Caco-2 (cell line): ENCODE measurements at regions of chr13 and their contacts with region 1.

Region 1: DNA sequence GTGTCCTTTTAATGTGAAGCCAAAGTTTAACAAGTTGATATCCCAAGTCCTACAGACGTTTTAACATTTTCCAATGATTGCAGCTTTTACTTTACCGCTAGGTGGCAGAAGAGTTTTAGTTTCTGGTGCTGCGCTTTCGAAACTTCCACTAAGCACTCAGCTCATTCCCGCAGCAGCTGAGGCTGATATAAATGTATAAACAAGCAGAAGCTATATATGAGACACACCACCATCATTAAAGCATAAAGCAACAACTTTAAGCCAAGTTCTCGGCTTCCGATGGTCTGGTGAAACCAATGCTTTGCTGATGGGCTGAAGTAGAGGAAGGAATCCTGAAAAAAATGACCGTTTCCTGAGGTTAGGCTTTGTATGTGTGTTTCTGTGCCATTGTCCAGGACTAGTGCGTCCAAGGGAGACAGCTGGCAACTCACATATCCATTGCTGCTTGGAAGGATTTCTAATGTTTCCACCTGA is 753.9 kb downstream of the OLFM4 start:
- DNase-seq: peak in 1 of 2 experiments; percentile 52
- H3K4me3 ChIP-seq: no peak overlapping the region
- H3K4me3 Mint-ChIP-seq: no peak overlapping the region
- H3K27ac Mint-ChIP-seq: no peak overlapping the region
- H3K4me1 ChIP-seq: no peaks in the 10 kb centered on the region
- H3K4me1 Mint-ChIP-seq: no peaks in the 10 kb centered on the region
- H3K27me3 ChIP-seq: no peaks in the 10 kb centered on the region; the same call in 1 of the 2 replicates
- H3K27me3 Mint-ChIP-seq: peaks cover 11% of the 10 kb centered on the region
- CTCF ChIP-seq: peak; percentile 73 to 83

Region 2: GRCh38 chr13:53250266-53250875 is 532.2 kb before region 1 on chr13:
- CTCF ChIA-PET with region 1: interaction called, 32 read pairs
- POLR2A ChIA-PET with region 1: no interaction called
- intact Hi-C with region 1: loop called (anchors 1 kb)
- DNase-seq: peak in 1 of 2 experiments; percentile 72
- H3K4me3 ChIP-seq: no peak overlapping the region
- H3K4me3 Mint-ChIP-seq: no peak overlapping the region
- H3K27ac Mint-ChIP-seq: no peak overlapping the region
- H3K4me1 ChIP-seq: no peaks in the 10 kb centered on the region
- H3K4me1 Mint-ChIP-seq: no peaks in the 10 kb centered on the region
- H3K27me3 ChIP-seq: no peaks in the 10 kb centered on the region
- H3K27me3 Mint-ChIP-seq: peaks cover 15% of the 10 kb centered on the region
- CTCF ChIP-seq: peak; percentile 68 to 77

Region 3: GRCh38 chr13:53368948-53369347 is 413.6 kb before region 1 on chr13:
- CTCF ChIA-PET with region 1: no interaction called
- POLR2A ChIA-PET with region 1: no interaction called
- intact Hi-C with region 1: loop called (anchors 5 kb)
- DNase-seq: peak in 1 of 2 experiments; percentile 12
- H3K4me3 ChIP-seq: no peak overlapping the region
- H3K4me3 Mint-ChIP-seq: no peak overlapping the region
- H3K27ac Mint-ChIP-seq: no peak overlapping the region
- H3K4me1 ChIP-seq: no peaks in the 10 kb centered on the region
- H3K4me1 Mint-ChIP-seq: no peaks in the 10 kb centered on the region
- H3K27me3 ChIP-seq: no peaks in the 10 kb centered on the region
- H3K27me3 Mint-ChIP-seq: peaks cover 4% of the 10 kb centered on the region
- CTCF ChIP-seq: peak; percentile 28 to 29

Region 4: DNA sequence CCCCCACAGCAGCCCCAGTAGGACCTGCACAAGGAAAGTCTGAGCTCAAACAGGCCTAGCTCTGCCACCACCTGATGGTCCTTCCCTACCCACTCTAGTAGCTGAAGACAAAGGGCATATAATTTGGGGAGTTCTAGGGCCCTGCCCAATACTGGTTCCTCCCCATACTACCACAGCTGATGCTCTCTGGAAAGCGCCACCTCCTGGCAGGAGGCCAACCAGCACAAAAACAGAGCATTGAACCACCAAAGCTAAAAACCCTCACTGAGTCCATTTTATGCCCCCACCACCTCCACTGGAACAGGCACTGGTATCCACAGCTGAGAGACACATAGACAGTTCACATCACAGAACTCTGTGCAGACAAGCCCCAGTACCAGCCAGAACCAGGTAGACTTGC is 522.9 kb after region 1 on chr13:
- CTCF ChIA-PET with region 1: interaction called, 11 read pairs
- POLR2A ChIA-PET with region 1: no interaction called
- intact Hi-C with region 1: loop called (anchors 10 kb)
- DNase-seq: no peak
- H3K4me3 ChIP-seq: no peak overlapping the region
- H3K4me3 Mint-ChIP-seq: no peak overlapping the region
- H3K27ac Mint-ChIP-seq: no peak overlapping the region
- H3K4me1 ChIP-seq: no peaks in the 10 kb centered on the region
- H3K4me1 Mint-ChIP-seq: no peaks in the 10 kb centered on the region
- H3K27me3 ChIP-seq: no peaks in the 10 kb centered on the region
- H3K27me3 Mint-ChIP-seq: peaks cover 5% of the 10 kb centered on the region
- CTCF ChIP-seq: peak; percentile 5 to 25